ENCODE measurements at regions of chr15 and their contacts with region 1.

Region 1: DNA sequence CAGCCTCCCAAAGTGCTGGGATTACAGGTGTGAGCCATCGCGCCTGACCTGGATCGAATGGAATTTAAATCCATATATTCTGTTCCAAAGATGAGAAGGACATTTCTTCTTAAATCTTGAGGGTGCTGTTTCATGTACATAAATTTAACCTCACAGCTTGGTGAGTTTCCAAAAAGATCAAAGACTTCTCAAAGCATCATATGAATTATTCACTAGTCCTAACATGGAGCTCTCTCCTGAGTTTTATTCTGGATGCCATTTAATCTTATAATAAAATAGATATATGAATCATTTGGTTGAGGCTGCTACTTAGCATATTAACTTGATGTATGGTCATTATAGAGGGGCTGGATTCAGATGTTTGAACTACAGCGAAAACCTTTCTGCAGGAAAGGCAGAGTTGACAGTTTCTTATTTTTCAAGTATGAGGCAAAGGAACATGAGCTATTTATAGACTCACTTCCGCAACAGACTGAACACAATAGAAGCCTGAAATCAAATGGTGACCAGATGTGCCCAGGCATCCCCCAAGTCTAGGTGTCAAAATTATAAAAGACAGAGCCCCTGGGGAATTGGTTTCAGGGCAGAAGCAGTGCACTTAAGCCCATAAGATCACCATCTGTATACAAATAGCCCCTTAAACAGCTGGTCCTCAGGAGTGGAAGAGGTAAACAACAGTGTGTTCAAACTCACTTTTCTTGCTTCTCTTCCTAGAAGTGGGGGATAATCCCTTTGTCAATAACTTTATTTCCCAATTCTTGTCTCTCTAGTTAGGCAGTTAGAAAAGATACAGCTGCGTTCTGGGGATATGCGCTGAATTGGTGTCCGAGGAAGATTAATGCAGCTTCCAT is 29.7 kb downstream of the STARD9 start:
- DNase-seq: peak; percentile 81
- H3K4me3 ChIP-seq: peak overlapping the region in 1 of 3 experiments; percentile 8
- H3K27ac ChIP-seq: peak overlapping the region; percentile 53
- H3K4me1 ChIP-seq: peaks cover 14% of the 10 kb centered on the region
- H3K27me3 ChIP-seq: no peaks in the 10 kb centered on the region
- CTCF ChIP-seq: no peak
- POLR2A ChIP-seq: no peak

Region 2: DNA sequence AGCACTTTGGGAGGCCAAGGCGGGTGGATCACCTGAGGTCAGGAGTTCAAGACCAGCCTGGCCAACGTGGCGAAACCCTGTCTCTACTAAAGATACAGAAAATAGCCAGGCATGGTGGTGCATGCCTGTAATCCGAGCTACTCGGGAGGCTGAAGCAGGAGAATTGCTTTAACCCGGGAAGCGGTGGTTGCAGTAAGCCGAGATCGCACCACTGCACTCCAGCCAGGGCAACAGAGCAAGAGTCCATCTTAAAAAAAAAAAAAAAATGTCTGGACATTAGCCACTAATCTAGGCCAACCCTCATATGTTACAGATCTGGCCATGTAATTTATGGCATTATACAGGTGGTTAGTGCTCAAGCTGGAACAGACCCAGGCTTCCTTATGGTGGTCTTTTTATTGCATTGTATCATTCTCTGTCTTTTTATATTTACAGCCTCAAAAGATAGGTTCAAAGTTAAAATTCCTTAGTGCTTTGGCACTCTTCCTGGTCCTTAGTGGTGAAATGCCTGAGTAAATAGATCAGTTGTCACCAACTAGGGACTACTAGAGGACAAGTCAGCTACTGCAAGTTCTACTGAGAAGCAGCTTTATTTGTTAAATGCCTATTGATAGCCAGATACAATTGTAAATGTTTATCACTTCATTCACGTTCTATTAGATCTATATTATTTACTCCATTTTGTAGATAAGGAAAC is 13.7 kb before region 1 on chr15:
- CTCF ChIA-PET with region 1: interaction called, 10 read pairs
- POLR2A ChIA-PET with region 1: no interaction called
- dilution Hi-C with region 1: no loop called
- intact Hi-C with region 1: no loop called
- DNase-seq: peak; percentile 47
- H3K4me3 ChIP-seq: no peak overlapping the region
- H3K27ac ChIP-seq: no peak overlapping the region
- H3K4me1 ChIP-seq: peaks cover 2% of the 10 kb centered on the region
- H3K27me3 ChIP-seq: no peaks in the 10 kb centered on the region
- CTCF ChIP-seq: peak in 1 of 2 donors; percentile 40
- POLR2A ChIP-seq: no peak